Activated CD8-positive, alpha-beta memory T cell treated with anti-CD3 and anti-CD28 coated beads, Interleukin-2, amount 10 ng/mL, durations not matched to agents 7 days and 5 days (primary cell): ENCODE measurements at regions of chr22 and their contacts with region 1.

Region 1: GRCh38 chr22:37862570-37863325 is 13.5 kb downstream of the EIF3L start:
- DNase-seq: no peak
- ATAC-seq: no peak
- H3K4me3 Mint-ChIP-seq: no peak overlapping the region
- H3K27ac Mint-ChIP-seq: no peak overlapping the region
- H3K4me1 Mint-ChIP-seq: peaks cover 3% of the 10 kb centered on the region
- H3K27me3 Mint-ChIP-seq: no peaks in the 10 kb centered on the region

Region 2: DNA sequence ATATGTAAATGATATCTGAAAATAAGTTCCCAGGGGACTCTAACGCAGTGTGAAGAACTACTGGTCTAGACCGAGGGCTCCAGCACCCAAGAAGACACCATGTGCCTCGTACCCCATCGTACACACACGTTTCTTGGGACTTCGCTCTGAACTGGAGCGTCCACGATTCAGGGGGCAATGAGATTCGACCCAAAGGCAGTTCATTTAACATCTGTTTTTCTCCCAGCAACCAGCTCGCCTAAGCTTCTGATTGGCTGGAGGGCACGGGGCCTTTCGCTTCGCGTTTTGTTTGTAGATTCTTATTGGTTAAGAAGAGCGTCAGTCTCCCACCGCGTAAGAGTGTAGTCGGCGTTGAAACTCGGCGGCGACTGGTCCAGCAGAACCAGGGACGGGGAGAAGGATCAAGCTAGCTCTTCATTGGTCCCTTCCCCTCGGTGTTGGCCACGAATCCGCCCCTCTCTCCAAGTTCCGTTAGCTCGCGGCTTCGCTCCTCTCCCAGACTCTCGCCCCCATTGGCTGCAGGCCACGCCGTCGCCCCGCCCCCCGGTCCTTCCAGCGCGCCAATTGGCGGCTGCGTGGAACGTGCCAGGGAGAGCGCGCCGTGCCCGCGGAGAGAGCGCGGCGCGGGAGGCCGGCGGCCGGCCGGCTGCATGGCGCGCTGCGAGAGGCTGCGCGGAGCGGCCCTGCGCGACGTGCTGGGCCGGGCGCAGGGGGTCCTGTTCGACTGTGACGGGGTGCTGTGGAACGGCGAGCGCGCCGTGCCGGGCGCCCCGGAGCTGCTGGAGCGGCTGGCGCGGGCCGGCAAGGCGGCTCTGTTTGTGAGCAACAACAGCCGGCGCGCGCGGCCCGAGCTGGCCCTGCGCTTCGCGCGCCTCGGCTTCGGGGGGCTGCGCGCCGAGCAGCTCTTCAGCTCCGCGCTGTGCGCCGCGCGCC is 204.3 kb before region 1 on chr22 and contains the start of gene PDXP:
- CTCF ChIA-PET with region 1: interaction called, 14 read pairs
- DNase-seq: peak; percentile 99
- ATAC-seq: peak; percentile 98
- H3K4me3 Mint-ChIP-seq: peak within 1 kb of the TSS; percentile 85
- H3K27ac Mint-ChIP-seq: peak within 1 kb of the TSS; percentile 88
- H3K4me1 Mint-ChIP-seq: peaks cover 39% of the 10 kb centered on the region
- H3K27me3 Mint-ChIP-seq: no peaks in the 10 kb centered on the region
- total RNA-seq, gene PDXP: 25.9 to 32.6 TPM

Region 3: DNA sequence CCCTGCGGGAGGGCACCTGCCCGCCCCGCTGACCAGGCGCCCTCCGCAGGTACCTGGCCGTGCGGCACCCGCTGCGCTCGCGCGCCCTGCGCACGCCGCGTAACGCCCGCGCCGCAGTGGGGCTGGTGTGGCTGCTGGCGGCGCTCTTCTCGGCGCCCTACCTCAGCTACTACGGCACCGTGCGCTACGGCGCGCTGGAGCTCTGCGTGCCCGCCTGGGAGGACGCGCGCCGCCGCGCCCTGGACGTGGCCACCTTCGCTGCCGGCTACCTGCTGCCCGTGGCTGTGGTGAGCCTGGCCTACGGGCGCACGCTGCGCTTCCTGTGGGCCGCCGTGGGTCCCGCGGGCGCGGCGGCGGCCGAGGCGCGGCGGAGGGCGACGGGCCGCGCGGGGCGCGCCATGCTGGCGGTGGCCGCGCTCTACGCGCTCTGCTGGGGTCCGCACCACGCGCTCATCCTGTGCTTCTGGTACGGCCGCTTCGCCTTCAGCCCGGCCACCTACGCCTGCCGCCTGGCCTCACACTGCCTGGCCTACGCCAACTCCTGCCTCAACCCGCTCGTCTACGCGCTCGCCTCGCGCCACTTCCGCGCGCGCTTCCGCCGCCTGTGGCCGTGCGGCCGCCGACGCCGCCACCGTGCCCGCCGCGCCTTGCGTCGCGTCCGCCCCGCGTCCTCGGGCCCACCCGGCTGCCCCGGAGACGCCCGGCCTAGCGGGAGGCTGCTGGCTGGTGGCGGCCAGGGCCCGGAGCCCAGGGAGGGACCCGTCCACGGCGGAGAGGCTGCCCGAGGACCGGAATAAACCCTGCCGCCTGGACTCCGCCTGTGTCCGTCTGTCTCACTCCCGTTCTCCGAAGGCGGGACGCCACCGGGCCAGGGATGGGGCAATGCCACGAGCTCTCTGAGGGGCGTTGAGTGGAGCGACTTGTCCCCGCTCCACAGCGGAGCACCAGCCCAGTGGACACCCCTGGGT is 37.8 kb before region 1 on chr22:
- CTCF ChIA-PET with region 1: interaction called, 138 read pairs
- DNase-seq: no peak
- ATAC-seq: peak; percentile 72
- H3K4me3 Mint-ChIP-seq: peak overlapping the region; percentile 69
- H3K27ac Mint-ChIP-seq: no peak overlapping the region
- H3K4me1 Mint-ChIP-seq: peaks cover 9% of the 10 kb centered on the region
- H3K27me3 Mint-ChIP-seq: peaks cover 24% of the 10 kb centered on the region

Region 4: DNA sequence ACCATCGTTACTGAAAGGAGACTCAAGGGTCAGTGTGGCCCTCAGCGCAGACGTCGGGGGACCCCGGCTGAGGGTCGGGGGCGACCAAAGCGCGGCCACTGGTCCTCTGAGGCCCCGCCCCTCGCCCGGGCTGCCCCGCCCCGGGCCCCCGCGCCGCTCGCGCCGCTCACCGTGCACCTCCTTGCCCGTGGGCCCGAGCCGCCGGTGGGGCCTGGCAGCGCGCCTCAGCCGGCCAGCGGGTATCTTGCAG is 19.1 kb before region 1 on chr22:
- CTCF ChIA-PET with region 1: interaction called, 28 read pairs
- DNase-seq: no peak
- ATAC-seq: peak; percentile 52
- H3K4me3 Mint-ChIP-seq: peak overlapping the region; percentile 92
- H3K27ac Mint-ChIP-seq: peak overlapping the region; percentile 91
- H3K4me1 Mint-ChIP-seq: peaks cover 31% of the 10 kb centered on the region
- H3K27me3 Mint-ChIP-seq: no peaks in the 10 kb centered on the region

Region 5: DNA sequence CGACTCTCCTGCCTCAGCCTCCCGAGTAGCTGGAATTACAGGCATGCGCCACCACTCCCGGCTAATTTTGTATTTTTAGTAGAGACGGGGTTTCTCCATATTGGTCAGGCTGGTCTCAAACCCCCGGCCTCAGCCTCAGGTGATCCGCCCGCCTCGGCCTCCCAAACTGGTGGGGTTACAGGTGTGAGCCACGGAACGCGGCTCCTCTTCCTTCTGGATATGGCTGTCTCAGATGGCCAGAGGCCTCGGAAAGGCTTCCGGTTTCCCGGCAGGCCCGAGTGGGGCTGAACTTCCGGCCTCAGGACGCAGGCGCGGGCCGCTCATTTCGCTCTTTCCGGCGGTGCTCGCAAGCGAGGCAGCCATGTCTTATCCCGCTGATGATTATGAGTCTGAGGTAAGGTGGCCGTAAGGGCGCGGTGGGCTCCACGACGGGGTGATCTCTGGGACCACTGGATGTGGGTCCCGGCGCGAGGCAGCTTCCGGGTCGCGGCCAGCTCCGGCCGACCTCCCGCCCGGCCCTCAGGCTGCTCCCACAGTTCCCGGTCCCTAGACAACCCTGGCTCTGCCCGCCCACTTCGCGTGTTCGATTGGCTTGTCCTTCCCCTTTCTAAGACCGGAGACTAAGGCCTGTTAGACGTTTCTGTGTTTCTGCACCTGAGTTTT is 13.5 kb before region 1 on chr22 and contains the start of gene EIF3L:
- CTCF ChIA-PET with region 1: interaction called, 28 read pairs
- DNase-seq: peak; percentile 94
- ATAC-seq: peak; percentile 80
- H3K4me3 Mint-ChIP-seq: peak within 1 kb of the TSS; percentile 93
- H3K27ac Mint-ChIP-seq: peak within 1 kb of the TSS; percentile 96
- H3K4me1 Mint-ChIP-seq: peaks cover 50% of the 10 kb centered on the region
- H3K27me3 Mint-ChIP-seq: no peaks in the 10 kb centered on the region
- total RNA-seq, gene EIF3L: 218 to 370 TPM

Region 6: GRCh38 chr22:37880668-37881440 is 18.1 kb after region 1 on chr22:
- CTCF ChIA-PET with region 1: interaction called, 12 read pairs
- DNase-seq: no peak
- ATAC-seq: no peak
- H3K4me3 Mint-ChIP-seq: no peak overlapping the region
- H3K27ac Mint-ChIP-seq: no peak overlapping the region
- H3K4me1 Mint-ChIP-seq: peaks cover 4% of the 10 kb centered on the region
- H3K27me3 Mint-ChIP-seq: no peaks in the 10 kb centered on the region

Region 7: GRCh38 chr22:37896181-37896592 is 33.4 kb after region 1 on chr22:
- CTCF ChIA-PET with region 1: interaction called, 20 read pairs
- DNase-seq: peak; percentile 80
- ATAC-seq: peak; percentile 99
- H3K4me3 Mint-ChIP-seq: peak overlapping the region; percentile 43
- H3K27ac Mint-ChIP-seq: peak overlapping the region; percentile 95
- H3K4me1 Mint-ChIP-seq: peaks cover 28% of the 10 kb centered on the region
- H3K27me3 Mint-ChIP-seq: no peaks in the 10 kb centered on the region